Activated naive CD4-positive, alpha-beta T cell treated with anti-CD3 and anti-CD28 coated beads for 36 hours (primary cell): ENCODE measurements at regions of chr20 and their contacts with region 1.

Region 1: GRCh38 chr20:1437235-1437904 is 29.3 kb downstream of the NSFL1C start:
- DNase-seq: peak; percentile 91
- H3K4me3 Mint-ChIP-seq: no peak overlapping the region
- H3K27ac Mint-ChIP-seq: no peak overlapping the region
- H3K4me1 Mint-ChIP-seq: peaks cover 30% of the 10 kb centered on the region
- H3K27me3 Mint-ChIP-seq: no peaks in the 10 kb centered on the region

Region 2: GRCh38 chr20:1225783-1226654 is 211.4 kb before region 1 on chr20 and contains the start of gene RAD21L1:
- CTCF ChIA-PET with region 1: interaction called, 3 read pairs
- intact Hi-C with region 1: loop called (anchors 2 kb)
- DNase-seq: peak; percentile 88
- H3K4me3 Mint-ChIP-seq: peak within 1 kb of the TSS; percentile 83
- H3K27ac Mint-ChIP-seq: no peak within 1 kb of the TSS
- H3K4me1 Mint-ChIP-seq: peaks cover 10% of the 10 kb centered on the region
- H3K27me3 Mint-ChIP-seq: peaks cover 6% of the 10 kb centered on the region
- total RNA-seq, gene RAD21L1: not detected

Region 3: GRCh38 chr20:1313236-1313964 is 124.0 kb before region 1 on chr20:
- CTCF ChIA-PET with region 1: interaction called, 35 read pairs
- intact Hi-C with region 1: loop called (anchors 1 kb)
- DNase-seq: peak; percentile 65
- H3K4me3 Mint-ChIP-seq: no peak overlapping the region
- H3K27ac Mint-ChIP-seq: no peak overlapping the region
- H3K4me1 Mint-ChIP-seq: peaks cover 6% of the 10 kb centered on the region
- H3K27me3 Mint-ChIP-seq: no peaks in the 10 kb centered on the region

Region 4: DNA sequence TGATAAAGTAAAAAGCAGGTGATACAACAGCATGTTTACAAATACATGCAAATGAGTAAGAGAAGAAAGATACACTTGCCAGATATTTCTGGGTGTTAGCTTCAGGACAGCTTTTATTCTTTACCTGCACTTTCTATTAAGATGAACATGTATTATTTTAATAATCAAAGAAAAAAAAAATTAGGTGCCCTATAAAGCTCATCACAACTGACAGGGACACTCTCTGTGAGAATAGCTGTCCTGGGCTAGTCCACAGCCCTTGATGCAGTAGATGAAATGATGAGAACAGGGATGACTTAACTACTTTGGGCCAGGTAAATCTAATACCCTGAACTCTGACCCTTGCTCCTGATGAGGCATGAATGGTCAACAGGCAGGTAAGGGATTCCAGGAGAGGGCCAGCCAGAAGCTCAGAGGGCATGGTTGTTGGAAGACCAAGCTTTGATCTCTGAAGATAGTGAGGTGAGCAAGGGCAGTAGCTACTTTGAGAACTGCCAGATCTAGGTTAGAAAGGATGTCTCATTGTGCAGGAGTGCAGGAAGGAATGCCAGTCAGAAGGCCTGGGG is 13.6 kb after region 1 on chr20:
- CTCF ChIA-PET with region 1: interaction called, 10 read pairs
- intact Hi-C with region 1: no loop called
- DNase-seq: no peak
- H3K4me3 Mint-ChIP-seq: no peak overlapping the region
- H3K27ac Mint-ChIP-seq: no peak overlapping the region
- H3K4me1 Mint-ChIP-seq: no peaks in the 10 kb centered on the region
- H3K27me3 Mint-ChIP-seq: no peaks in the 10 kb centered on the region